ENCODE measurements at regions of chr16 and their contacts with region 1.

Region 1: DNA sequence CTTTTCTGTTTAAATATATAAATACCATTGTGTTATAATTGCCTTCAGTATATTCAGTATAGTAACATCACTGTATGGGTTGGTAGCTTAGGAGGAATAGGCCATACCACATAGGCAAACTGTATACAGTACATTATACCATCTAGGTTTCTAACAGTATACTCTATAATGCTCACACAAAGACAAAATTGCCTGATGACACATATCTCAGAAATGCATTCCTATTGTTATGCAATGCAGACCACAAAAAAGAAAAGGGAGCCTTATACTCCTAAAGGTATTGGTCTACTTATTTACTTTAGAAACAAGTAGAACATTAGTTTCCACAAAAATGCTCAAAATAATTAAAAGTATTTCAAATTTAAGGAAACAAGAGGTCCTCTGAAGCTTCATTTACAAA is 47.9 kb downstream of the SETD6 start:
- DNase-seq: no peak
- H3K4me3 Mint-ChIP-seq: no peak overlapping the region
- H3K27ac Mint-ChIP-seq: no peak overlapping the region
- H3K4me1 Mint-ChIP-seq: peaks cover 3% of the 10 kb centered on the region
- H3K27me3 Mint-ChIP-seq: no peaks in the 10 kb centered on the region

Region 2: DNA sequence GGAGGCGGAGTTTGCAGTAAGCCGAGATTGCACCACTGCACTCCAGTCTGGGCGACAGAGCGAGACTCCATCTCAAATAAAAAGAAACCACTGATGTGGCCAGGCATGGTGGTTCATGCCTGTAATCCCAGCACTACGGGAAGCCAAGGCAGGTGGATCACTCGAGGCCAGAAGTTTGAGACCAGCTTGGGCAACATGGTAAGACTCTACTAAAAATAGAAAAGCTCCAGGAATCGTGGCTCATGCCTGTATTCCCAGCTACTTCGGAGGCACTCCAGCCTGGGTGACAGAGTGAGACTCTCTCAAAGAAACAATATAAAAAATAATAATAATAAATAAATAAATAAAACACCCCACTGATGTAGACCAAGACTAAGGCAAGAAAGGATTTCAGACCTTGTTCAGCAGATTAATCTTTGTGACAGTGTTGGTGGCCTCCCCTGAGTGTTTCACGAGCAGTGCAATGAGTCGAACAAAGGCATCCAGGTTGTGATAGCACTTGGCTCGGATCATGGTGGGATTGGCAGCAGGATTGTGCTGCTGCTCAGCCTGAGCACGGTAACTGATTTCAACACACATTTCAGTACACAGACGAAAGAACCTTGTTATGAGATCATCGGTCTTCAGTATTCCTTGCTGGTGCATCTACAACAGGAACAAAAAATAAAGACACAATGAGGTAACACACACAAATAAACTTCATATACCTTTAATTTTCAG is 29.3 kb before region 1 on chr16:
- CTCF ChIA-PET with region 1: interaction called, 3 read pairs
- POLR2A ChIA-PET with region 1: no interaction called
- intact Hi-C with region 1: loop called (anchors 5 kb)
- DNase-seq: no peak
- H3K4me3 Mint-ChIP-seq: no peak overlapping the region
- H3K27ac Mint-ChIP-seq: no peak overlapping the region
- H3K4me1 Mint-ChIP-seq: no peaks in the 10 kb centered on the region
- H3K27me3 Mint-ChIP-seq: no peaks in the 10 kb centered on the region

Region 3: DNA sequence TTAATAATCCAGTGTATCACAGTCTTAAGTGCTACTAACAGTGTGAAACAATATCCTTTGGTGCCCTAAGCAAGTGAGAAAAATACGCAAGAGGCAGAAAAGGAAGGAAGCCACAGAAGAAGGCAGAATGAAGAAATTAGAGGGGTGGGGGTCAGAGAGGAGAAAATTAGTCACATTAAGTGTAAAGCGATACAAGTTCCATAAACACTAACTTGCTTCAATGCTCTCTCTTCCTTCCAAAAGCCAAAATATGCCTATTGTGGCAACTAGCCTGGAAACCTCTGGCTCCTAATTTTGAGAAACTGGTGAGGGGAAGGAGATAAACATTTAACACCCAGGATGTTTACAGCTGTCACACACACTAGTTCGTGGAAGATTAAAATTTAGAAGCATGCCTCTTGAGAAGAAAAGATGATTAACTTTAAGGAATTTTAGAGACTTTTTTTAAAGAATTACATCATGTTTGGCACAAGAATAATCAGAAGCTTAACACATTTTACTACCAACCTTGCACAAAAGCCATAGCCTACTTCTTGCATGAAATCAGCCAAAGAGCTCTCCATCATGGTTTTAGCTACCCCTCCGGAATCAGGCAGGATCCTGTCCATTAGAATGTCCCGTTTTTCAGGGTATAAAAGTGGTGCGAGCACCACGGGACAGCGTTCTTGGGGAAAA is 21.7 kb after region 1 on chr16:
- CTCF ChIA-PET with region 1: no interaction called
- POLR2A ChIA-PET with region 1: no interaction called
- intact Hi-C with region 1: no loop called
- DNase-seq: no peak
- H3K4me3 Mint-ChIP-seq: no peak overlapping the region
- H3K27ac Mint-ChIP-seq: no peak overlapping the region
- H3K4me1 Mint-ChIP-seq: peaks cover 14% of the 10 kb centered on the region
- H3K27me3 Mint-ChIP-seq: no peaks in the 10 kb centered on the region

Measured in activated CD4-positive, alpha-beta memory T cell treated with anti-CD3 and anti-CD28 coated beads for 36 hours (primary cell).